Activated B cell treated with CpG ODN at 0.5 μM for 24 hours (primary cell): ENCODE measurements at regions of chr10 and their contacts with region 1.

Region 1: GRCh38 chr10:26457088-26457487 is 18.9 kb downstream of the APBB1IP start:
- DNase-seq: no peak
- ATAC-seq: peak; percentile 93
- H3K4me3 Mint-ChIP-seq: peak overlapping the region; percentile 63
- H3K27ac Mint-ChIP-seq: peak overlapping the region; percentile 91
- H3K4me1 Mint-ChIP-seq: peaks cover 71% of the 10 kb centered on the region
- H3K27me3 Mint-ChIP-seq: no peaks in the 10 kb centered on the region
- CTCF ChIP-seq: no peak

Region 2: GRCh38 chr10:26430641-26431164 is 26.4 kb before region 1 on chr10:
- CTCF ChIA-PET with region 1: no interaction called
- POLR2A ChIA-PET with region 1: no interaction called
- intact Hi-C with region 1: loop called (anchors 1 kb)
- DNase-seq: no peak
- ATAC-seq: peak; percentile 95
- H3K4me3 Mint-ChIP-seq: peak overlapping the region; percentile 74
- H3K27ac Mint-ChIP-seq: peak overlapping the region; percentile 94
- H3K4me1 Mint-ChIP-seq: peaks cover 19% of the 10 kb centered on the region
- H3K27me3 Mint-ChIP-seq: no peaks in the 10 kb centered on the region
- CTCF ChIP-seq: no peak

Region 3: DNA sequence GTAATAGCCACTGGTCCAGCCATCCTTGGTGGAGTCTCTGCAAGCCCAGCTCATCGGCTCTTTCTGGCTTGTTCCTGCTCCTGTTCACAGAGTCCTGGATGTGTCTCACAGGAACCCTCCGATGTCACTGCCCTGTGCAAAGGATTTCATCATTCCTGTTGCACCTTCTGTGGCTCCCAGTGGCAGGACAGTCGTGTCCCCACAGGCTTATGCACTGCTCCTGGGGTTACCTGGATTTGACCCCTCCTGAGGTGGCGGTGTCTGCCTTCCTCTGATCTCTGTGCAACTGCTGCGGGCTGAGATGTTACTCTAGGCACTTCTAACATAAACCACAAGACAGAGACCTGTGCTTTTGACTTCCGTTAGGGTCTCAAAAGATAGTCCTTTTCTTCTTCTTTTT is 11.6 kb after region 1 on chr10:
- CTCF ChIA-PET with region 1: no interaction called
- POLR2A ChIA-PET with region 1: interaction called, 8 read pairs
- intact Hi-C with region 1: loop called (anchors 1 kb)
- DNase-seq: no peak
- ATAC-seq: peak; percentile 47
- H3K4me3 Mint-ChIP-seq: peak overlapping the region; percentile 73
- H3K27ac Mint-ChIP-seq: peak overlapping the region; percentile 85
- H3K4me1 Mint-ChIP-seq: peaks cover 91% of the 10 kb centered on the region
- H3K27me3 Mint-ChIP-seq: no peaks in the 10 kb centered on the region
- CTCF ChIP-seq: no peak

Region 4: GRCh38 chr10:26486991-26487850 is 30.1 kb after region 1 on chr10:
- CTCF ChIA-PET with region 1: no interaction called
- POLR2A ChIA-PET with region 1: interaction called, 7 read pairs
- intact Hi-C with region 1: loop called (anchors 1 kb)
- DNase-seq: no peak
- ATAC-seq: peak; percentile 82
- H3K4me3 Mint-ChIP-seq: peak overlapping the region; percentile 59
- H3K27ac Mint-ChIP-seq: peak overlapping the region; percentile 90
- H3K4me1 Mint-ChIP-seq: peaks cover 66% of the 10 kb centered on the region
- H3K27me3 Mint-ChIP-seq: no peaks in the 10 kb centered on the region
- CTCF ChIP-seq: no peak

Region 5: GRCh38 chr10:27865221-27865638 is 1408.1 kb after region 1 on chr10:
- CTCF ChIA-PET with region 1: no interaction called
- POLR2A ChIA-PET with region 1: no interaction called
- intact Hi-C with region 1: no loop called
- DNase-seq: no peak
- ATAC-seq: no peak
- H3K4me3 Mint-ChIP-seq: no peak overlapping the region
- H3K27ac Mint-ChIP-seq: no peak overlapping the region
- H3K4me1 Mint-ChIP-seq: no peaks in the 10 kb centered on the region
- H3K27me3 Mint-ChIP-seq: no peaks in the 10 kb centered on the region
- CTCF ChIP-seq: no peak